ENCODE measurements at regions of chr4 and their contacts with region 1.

Region 1: GRCh38 chr4:123396307-123397143 is at the start of gene SPRY1:
- DNase-seq: peak; percentile 83 to 94 (median 90)
- ATAC-seq: peak; percentile 74
- H3K4me3 ChIP-seq: peak within 1 kb of the TSS; percentile 64 to 73
- H3K27ac ChIP-seq: peak within 1 kb of the TSS; percentile 88 to 95
- H3K4me1 ChIP-seq: peaks cover 0 to 7% of the 10 kb centered on the region in 2 donors
- H3K27me3 ChIP-seq: peaks cover 0 to 25% of the 10 kb centered on the region in 2 donors
- CTCF ChIP-seq: no peak
- polyA plus RNA-seq, gene SPRY1: 84.8 to 126 (median 103) TPM

Region 2: DNA sequence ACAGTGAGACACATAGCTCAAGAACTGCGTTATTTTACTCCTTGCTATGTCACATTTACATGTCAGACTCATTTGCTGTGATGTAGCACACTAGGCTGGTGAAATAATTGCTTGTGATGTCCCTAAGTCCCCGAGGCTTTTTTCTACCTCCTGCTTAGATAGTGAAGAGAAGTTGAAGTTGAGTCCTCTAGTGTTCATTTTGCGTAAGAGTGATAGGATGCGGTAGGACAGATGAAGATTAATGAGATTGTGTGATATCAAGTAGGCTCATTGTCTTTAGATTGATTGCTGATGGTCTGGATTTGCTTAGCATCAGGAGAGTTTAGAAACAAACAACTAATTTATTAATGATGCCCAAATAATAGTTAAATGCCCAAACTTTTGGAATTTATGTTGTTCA is 300.5 kb before region 1 on chr4:
- intact Hi-C with region 1: no loop called
- DNase-seq: no peak
- ATAC-seq: no peak
- H3K4me3 ChIP-seq: no peak overlapping the region
- H3K27ac ChIP-seq: no peak overlapping the region
- H3K4me1 ChIP-seq: no peaks in the 10 kb centered on the region
- H3K27me3 ChIP-seq: no peaks in the 10 kb centered on the region
- CTCF ChIP-seq: no peak

Region 3: DNA sequence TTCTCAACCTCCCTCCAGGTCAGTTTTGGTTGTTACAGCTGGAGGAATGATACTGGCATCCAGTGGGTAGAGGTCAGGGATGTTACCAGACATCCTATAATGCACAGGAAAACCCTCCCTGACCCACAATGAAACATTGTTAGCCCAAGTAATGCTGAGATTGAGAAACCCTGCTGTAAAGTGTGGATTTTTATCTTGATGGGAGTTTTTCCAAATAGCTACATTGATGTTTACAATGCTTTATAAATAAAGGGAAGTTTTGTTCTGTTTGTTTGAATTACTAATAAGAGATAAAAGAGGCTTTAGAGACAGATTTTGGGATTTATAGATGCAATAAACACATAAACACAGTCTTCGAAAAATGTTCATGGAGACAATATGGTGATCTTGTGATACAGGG is 280.1 kb before region 1 on chr4:
- intact Hi-C with region 1: loop called in 1 of 2 experiments (anchors 10 kb)
- DNase-seq: peak in 2 of 4 donors; percentile 61 to 72
- ATAC-seq: no peak
- H3K4me3 ChIP-seq: no peak overlapping the region
- H3K27ac ChIP-seq: no peak overlapping the region
- H3K4me1 ChIP-seq: no peaks in the 10 kb centered on the region
- H3K27me3 ChIP-seq: no peaks in the 10 kb centered on the region
- CTCF ChIP-seq: no peak

Region 4: DNA sequence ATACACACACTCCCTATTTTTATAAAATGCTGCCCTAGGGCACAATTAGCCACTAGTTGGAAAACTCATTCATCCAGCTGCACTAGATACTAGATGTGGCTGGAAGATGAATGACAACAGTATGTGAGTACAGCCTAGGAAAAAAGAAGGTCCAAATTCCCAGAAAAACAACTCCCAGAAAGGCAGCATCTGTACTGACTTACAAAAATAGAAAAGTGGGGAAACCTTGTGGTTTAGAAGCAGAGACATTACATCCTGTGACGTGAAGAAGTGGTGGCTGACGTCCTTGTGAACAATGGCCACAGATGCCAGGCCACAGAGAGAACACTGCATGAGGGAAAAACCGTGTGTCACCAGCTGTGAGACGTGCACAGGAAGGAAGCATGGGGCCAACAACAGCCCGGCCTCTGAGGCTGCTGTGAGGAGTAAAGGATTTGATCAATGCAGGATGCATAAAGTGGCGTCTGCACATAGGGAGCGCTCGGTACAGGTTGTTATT is 81.2 kb after region 1 on chr4:
- intact Hi-C with region 1: no loop called
- DNase-seq: peak in 2 of 4 donors; percentile 24 to 60
- ATAC-seq: peak; percentile 7
- H3K4me3 ChIP-seq: no peak overlapping the region
- H3K27ac ChIP-seq: peak overlapping the region in 1 of 2 donors; percentile 66
- H3K4me1 ChIP-seq: peaks cover 0 to 24% of the 10 kb centered on the region in 2 donors
- H3K27me3 ChIP-seq: no peaks in the 10 kb centered on the region
- CTCF ChIP-seq: no peak

Region 5: GRCh38 chr4:123536225-123536624 is 139.7 kb after region 1 on chr4:
- intact Hi-C with region 1: no loop called
- DNase-seq: no peak
- ATAC-seq: no peak
- H3K4me3 ChIP-seq: no peak overlapping the region
- H3K27ac ChIP-seq: no peak overlapping the region
- H3K4me1 ChIP-seq: no peaks in the 10 kb centered on the region
- H3K27me3 ChIP-seq: no peaks in the 10 kb centered on the region
- CTCF ChIP-seq: no peak

Region 6: DNA sequence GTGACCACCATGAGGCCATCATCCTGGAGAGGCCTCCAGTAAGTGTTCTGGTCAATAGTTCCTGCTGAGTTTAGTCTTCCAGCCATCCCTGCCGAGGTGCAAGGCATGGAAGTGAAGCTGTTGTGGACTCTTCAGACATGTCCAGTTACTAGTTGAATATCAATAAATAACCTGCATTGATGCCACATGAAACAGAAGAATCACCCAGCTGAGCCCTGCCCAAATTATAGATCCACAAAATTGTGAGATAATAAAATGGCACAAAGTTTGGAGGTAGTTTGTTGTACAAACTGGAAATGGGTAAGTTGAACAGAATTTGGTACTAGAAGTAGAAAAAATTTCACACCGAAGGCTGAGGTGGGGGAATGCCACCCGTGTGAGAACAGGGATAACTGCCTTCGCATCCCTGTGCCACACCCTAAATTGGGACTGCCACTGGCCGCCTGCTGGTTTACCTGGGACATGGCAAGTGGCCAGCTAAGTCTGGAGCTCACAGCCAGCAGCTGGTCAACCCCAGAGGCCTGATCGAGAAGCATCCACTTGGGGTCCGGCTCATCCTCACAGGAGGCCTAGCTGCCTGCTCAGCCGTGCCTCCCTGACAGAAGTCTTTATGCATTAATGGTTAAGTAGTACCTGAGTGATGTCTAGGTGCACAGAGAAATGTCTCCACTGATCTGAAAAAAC is 184.6 kb after region 1 on chr4:
- intact Hi-C with region 1: no loop called
- DNase-seq: peak in 1 of 4 donors; percentile 57
- ATAC-seq: no peak
- H3K4me3 ChIP-seq: no peak overlapping the region
- H3K27ac ChIP-seq: no peak overlapping the region
- H3K4me1 ChIP-seq: no peaks in the 10 kb centered on the region
- H3K27me3 ChIP-seq: no peaks in the 10 kb centered on the region
- CTCF ChIP-seq: no peak

Region 7: GRCh38 chr4:123649645-123650391 is 253.3 kb after region 1 on chr4:
- intact Hi-C with region 1: loop called in 1 of 2 experiments (anchors 10 kb)
- DNase-seq: peak in 3 of 4 donors; percentile 38 to 73 (median 64)
- ATAC-seq: peak; percentile 90
- H3K4me3 ChIP-seq: no peak overlapping the region
- H3K27ac ChIP-seq: peak overlapping the region; percentile 35 to 74
- H3K4me1 ChIP-seq: peaks cover 10 to 11% of the 10 kb centered on the region in 2 donors
- H3K27me3 ChIP-seq: no peaks in the 10 kb centered on the region
- CTCF ChIP-seq: no peak

Region 8: DNA sequence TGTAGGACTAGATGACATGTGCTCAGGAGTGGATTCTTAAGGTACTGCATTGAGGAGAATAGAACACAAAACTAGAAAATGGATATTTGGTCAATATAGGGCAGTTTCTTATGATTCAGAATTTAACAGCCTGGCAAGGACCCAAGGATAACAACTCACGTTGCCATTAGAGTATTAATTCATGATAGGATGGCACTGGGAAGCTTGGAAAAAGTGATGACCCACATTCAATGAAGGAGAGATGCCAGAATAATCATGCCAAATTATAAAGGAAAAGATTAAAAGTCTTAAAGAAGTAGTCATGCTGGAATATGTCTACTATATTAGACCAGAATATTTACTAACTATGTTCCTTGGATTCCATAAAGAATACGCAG is 721.5 kb after region 1 on chr4:
- intact Hi-C with region 1: loop called in 1 of 2 experiments (anchors 5 kb)
- DNase-seq: no peak
- ATAC-seq: no peak
- H3K4me3 ChIP-seq: no peak overlapping the region
- H3K27ac ChIP-seq: no peak overlapping the region
- H3K4me1 ChIP-seq: no peaks in the 10 kb centered on the region
- H3K27me3 ChIP-seq: no peaks in the 10 kb centered on the region
- CTCF ChIP-seq: no peak